Calu3 (cell line): ENCODE measurements at regions of chr2 and their contacts with region 1.

Region 1: DNA sequence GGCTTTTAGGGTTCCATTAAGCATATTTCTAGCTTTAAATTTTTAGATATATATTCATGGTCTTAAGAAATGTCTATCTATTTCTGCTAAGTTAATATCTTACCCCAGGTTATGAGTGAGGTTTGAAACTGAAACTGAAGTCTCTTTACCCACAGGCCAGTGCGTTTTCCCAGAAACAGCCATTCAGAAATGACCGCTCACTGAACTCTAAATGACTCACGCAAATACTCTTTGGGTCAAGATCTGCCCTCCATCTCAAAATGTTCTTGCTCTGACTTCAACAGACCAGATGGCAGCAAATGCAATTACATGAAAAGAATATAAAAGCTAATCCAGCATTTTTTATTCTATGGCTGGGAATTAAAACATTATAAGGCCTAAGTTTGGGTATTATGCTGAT is 315.2 kb downstream of the TDRD15 start:
- DNase-seq: no peak
- H3K4me3 Mint-ChIP-seq: no peak overlapping the region
- H3K27ac Mint-ChIP-seq: no peak overlapping the region
- H3K4me1 Mint-ChIP-seq: no peaks in the 10 kb centered on the region
- H3K27me3 Mint-ChIP-seq: no peaks in the 10 kb centered on the region
- CTCF ChIP-seq: no peak

Region 2: GRCh38 chr2:21396252-21396651 is 42.7 kb before region 1 on chr2:
- CTCF ChIA-PET with region 1: no interaction called
- intact Hi-C with region 1: loop called (anchors 1 kb)
- DNase-seq: no peak
- H3K4me3 Mint-ChIP-seq: no peak overlapping the region
- H3K27ac Mint-ChIP-seq: no peak overlapping the region
- H3K4me1 Mint-ChIP-seq: no peaks in the 10 kb centered on the region
- H3K27me3 Mint-ChIP-seq: no peaks in the 10 kb centered on the region
- CTCF ChIP-seq: no peak